Activated CD4-positive, alpha-beta memory T cell treated with anti-CD3 and anti-CD28 coated beads for 36 hours (primary cell): ENCODE measurements at regions of chr17 and their contacts with region 1.

Region 1: DNA sequence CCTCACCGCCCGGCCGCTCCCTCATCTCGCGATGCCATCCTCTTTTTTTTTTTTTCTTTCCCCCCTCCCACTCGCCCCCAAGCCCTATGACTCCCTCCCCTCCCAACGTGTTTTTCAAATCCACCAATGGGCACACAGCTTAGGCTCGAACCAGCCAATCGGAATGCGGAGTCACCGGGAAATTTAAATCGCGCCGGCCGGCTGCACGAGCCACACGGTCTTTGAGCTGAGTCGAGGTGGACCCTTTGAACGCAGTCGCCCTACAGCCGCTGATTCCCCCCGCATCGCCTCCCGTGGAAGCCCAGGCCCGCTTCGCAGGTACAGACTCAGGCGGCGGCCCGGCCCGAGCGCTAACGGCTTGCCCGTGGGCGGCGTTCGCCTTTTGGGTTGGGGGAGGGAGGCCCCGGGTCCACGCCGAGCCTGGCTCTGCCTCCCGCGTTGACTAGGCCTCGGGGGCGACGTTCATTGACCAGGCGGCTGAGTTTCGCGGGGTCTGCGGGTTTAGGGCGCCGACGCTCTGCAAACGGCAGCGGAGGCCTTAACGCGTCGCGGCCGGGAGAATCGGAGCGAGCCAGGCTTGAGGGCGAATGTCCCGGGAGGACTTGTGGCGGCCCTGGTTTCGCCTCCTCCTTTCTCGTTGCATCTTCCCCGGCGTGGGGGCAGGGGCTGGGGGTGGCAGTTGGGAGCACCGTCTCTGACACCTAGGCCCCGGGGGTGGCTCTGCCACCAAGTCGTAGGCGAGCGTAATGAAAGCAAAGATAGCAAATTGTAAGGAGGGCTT is at the start of gene KPNA2:
- DNase-seq: peak; percentile 95
- H3K4me3 Mint-ChIP-seq: peak within 1 kb of the TSS; percentile 95
- H3K27ac Mint-ChIP-seq: peak within 1 kb of the TSS; percentile 95
- H3K4me1 Mint-ChIP-seq: peaks cover 21% of the 10 kb centered on the region
- H3K27me3 Mint-ChIP-seq: no peaks in the 10 kb centered on the region
- total RNA-seq, gene KPNA2: 225 to 229 TPM

Region 2: GRCh38 chr17:68019675-68020408 is 15.9 kb before region 1 on chr17:
- CTCF ChIA-PET with region 1: interaction called, 5 read pairs
- POLR2A ChIA-PET with region 1: interaction called, 13 read pairs
- intact Hi-C with region 1: loop called (anchors 1 kb)
- DNase-seq: peak; percentile 99
- H3K4me3 Mint-ChIP-seq: peak overlapping the region; percentile 86
- H3K27ac Mint-ChIP-seq: peak overlapping the region; percentile 75
- H3K4me1 Mint-ChIP-seq: peaks cover 9% of the 10 kb centered on the region
- H3K27me3 Mint-ChIP-seq: peaks cover 2% of the 10 kb centered on the region

Region 3: DNA sequence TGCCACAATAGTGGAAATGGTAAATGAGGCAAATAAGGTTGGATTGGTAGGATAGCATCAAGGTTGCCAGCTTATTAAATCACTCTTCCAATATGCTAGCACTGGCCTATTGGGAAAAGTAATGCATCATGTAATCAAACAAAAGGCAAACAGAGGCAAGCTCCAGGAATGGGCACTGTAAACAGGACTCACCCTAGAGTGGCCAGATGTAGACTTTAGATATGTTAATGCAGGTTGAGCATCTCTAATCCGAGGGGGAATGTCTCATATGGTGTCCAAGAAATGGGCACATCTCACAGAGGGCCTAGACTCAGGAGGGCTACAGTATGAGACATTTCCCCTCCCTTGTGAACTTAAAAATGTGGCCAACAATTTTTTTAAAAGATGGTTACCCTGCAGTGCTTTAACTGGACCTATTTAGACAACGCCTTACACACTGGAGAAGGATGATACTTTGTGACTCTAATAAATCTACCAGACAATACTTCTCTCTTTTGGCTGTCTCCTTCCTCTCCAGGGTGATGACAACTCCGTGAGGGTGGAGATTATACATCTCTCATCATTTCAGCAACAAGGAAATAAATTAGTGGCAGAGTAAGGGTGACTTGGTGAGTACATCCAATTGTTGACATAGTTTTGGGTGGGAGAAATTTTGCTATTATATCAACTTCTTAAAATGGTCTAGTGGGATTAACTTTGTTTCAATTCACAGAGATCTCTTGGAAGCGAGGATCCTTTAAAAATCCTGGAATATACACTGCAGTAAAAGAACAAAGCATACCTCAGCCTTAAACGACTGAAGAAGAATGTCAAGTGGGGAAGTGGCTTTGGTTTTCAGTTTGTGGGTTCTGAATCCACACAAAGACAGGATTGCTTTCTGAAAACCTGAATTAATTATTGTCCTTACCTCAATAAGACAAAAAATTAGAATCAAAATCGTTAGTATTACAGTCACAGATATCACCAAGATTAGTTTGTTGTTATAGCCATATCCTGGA is 89.5 kb after region 1 on chr17:
- CTCF ChIA-PET with region 1: no interaction called
- POLR2A ChIA-PET with region 1: no interaction called
- intact Hi-C with region 1: no loop called
- DNase-seq: no peak
- H3K4me3 Mint-ChIP-seq: no peak overlapping the region
- H3K27ac Mint-ChIP-seq: no peak overlapping the region
- H3K4me1 Mint-ChIP-seq: peaks cover 4% of the 10 kb centered on the region
- H3K27me3 Mint-ChIP-seq: no peaks in the 10 kb centered on the region

Region 4: GRCh38 chr17:68196944-68197595 is 161.4 kb after region 1 on chr17:
- CTCF ChIA-PET with region 1: no interaction called
- POLR2A ChIA-PET with region 1: no interaction called
- intact Hi-C with region 1: loop called (anchors 5 kb)
- DNase-seq: peak; percentile 66
- H3K4me3 Mint-ChIP-seq: peak overlapping the region; percentile 70
- H3K27ac Mint-ChIP-seq: no peak overlapping the region
- H3K4me1 Mint-ChIP-seq: peaks cover 35% of the 10 kb centered on the region
- H3K27me3 Mint-ChIP-seq: peaks cover 13% of the 10 kb centered on the region

Region 5: DNA sequence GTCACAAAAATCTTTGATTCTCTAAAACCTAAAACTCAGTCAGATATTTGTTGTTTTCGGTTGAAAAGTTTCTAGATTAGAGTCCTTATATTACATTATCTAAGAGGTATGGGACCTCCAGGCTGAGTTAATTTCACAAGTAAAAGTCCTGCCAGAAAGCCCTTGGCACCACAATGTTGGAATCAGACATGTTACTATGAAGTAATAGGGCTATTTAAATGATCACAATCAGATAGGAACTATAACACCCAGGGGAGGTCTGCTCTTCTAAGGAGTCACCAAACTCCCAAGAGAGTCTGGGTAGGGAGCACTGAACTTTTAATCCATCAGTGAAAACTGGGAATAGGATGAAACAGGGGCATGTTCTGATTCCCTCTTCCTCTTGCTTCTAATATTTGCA is 367.4 kb after region 1 on chr17:
- CTCF ChIA-PET with region 1: no interaction called
- POLR2A ChIA-PET with region 1: no interaction called
- intact Hi-C with region 1: no loop called
- DNase-seq: no peak
- H3K4me3 Mint-ChIP-seq: no peak overlapping the region
- H3K27ac Mint-ChIP-seq: no peak overlapping the region
- H3K4me1 Mint-ChIP-seq: peaks cover 27% of the 10 kb centered on the region
- H3K27me3 Mint-ChIP-seq: no peaks in the 10 kb centered on the region